ENCODE measurements at regions of chr15 and their contacts with region 1.

Region 1: DNA sequence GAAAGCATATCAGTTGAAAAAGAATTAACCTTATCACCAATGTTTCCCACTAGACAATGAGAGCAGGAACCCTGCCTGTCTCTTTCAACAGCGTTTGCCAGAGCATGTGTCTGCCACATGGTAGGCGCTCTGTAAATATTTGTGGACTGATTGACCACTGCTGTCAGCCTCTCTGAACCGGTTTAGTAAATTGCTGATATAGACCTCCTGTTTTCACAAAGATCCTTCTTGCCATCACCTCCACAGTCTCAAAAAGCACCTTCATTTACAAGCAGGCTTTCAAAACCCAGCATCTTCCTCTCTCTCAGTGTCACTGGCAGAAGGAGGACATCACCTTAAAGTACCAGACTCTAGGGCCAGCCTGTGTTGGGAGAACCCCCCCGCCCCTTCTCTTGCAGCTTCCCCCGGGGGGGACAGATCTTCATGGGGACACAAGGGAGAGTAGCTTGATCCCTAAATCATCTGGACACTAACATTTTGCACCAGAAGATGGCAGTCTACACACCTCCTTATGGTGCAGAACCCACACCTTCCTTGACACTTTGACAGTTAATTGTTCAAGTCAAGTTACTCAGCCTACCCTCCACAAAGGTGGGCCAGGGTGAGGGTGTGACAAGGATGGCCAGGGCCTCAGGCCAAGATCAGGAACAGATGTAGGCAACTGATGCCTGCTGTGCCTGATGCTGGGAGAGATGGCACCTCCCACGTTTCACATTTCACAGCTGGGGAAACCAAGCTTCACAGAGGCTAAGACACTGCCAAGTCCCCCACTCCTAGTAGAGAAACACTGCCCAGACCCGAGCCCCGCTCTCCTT is 37.8 kb upstream of the USP3 start:
- DNase-seq: no peak
- ATAC-seq: peak; percentile 96
- H3K4me3 ChIP-seq: no peak overlapping the region
- H3K27ac ChIP-seq: no peak overlapping the region
- H3K4me1 ChIP-seq: peaks cover 16% of the 10 kb centered on the region
- H3K27me3 ChIP-seq: no peaks in the 10 kb centered on the region
- CTCF ChIP-seq: peak; percentile 65 to 79 (median 70)
- EP300 ChIP-seq: no peak
- POLR2A ChIP-seq: no peak
- RAD21 ChIP-seq: peak; percentile 89

Region 2: GRCh38 chr15:63318344-63318743 is 148.2 kb before region 1 on chr15:
- CTCF ChIA-PET with region 1: no interaction called
- POLR2A ChIA-PET with region 1: no interaction called
- RAD21 ChIA-PET with region 1: no interaction called
- SMC1A ChIA-PET with region 1: no interaction called
- in situ Hi-C with region 1: no loop called
- intact Hi-C with region 1: no loop called
- DNase-seq: peak; percentile 8
- ATAC-seq: peak; percentile 74
- H3K4me3 ChIP-seq: no peak overlapping the region
- H3K27ac ChIP-seq: no peak overlapping the region
- H3K4me1 ChIP-seq: no peaks in the 10 kb centered on the region
- H3K27me3 ChIP-seq: no peaks in the 10 kb centered on the region
- CTCF ChIP-seq: no peak
- EP300 ChIP-seq: no peak
- POLR2A ChIP-seq: no peak
- RAD21 ChIP-seq: no peak

Region 3: GRCh38 chr15:63481105-63481810 is 14.7 kb after region 1 on chr15:
- CTCF ChIA-PET with region 1: interaction called, 62 read pairs
- POLR2A ChIA-PET with region 1: interaction called, 4 read pairs
- RAD21 ChIA-PET with region 1: interaction called, 84 read pairs
- SMC1A ChIA-PET with region 1: interaction called, 89 read pairs
- in situ Hi-C with region 1: no loop called
- intact Hi-C with region 1: no loop called
- DNase-seq: peak; percentile 83
- ATAC-seq: peak; percentile 60
- H3K4me3 ChIP-seq: no peak overlapping the region
- H3K27ac ChIP-seq: peak overlapping the region; percentile 77
- H3K4me1 ChIP-seq: peaks cover 88% of the 10 kb centered on the region
- H3K27me3 ChIP-seq: no peaks in the 10 kb centered on the region
- CTCF ChIP-seq: 0 out of 6 replicates have a peak, but pooled peaks of 1 of the 3 experiments have one; percentile 4
- EP300 ChIP-seq: 0 out of 4 replicates have a peak, but pooled peaks of 1 of the 2 experiments have one; percentile 23
- POLR2A ChIP-seq: no peak
- RAD21 ChIP-seq: no peak

Region 4: DNA sequence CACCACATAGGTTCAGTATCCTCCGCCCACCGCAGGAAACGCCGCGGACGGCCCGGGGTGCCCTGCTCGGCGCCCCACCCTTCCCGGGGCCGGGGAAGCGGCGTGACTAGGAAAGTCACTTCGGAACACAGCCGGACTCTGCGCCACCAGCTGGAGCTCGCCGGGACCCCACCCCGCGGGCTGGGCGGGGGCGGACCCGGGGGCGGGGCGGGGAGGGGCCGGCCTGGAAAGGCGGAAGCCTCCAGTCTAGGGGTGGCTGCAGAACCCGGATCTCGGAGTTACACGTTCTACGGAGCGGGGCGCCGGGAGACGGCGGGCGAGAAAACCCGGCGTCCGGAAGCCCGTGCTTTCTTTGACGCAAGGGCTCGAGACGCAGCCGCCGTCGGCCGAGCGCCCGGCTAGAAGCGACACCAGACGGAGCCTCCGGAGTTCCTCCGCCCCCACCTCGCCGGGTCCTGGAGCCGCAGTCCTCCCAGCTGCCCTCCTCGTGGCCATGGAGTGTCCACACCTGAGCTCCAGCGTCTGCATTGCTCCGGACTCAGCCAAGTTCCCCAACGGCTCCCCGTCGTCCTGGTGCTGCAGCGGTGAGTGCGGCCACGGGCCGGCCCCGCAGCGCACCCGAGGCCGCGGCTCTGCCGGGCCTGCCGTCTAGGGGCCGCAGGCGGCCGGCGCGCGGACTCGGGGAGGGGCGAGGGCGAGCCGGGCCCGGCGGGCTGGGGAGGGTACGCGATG is 37.8 kb after region 1 on chr15 and contains the start of gene USP3:
- CTCF ChIA-PET with region 1: interaction called, 34 read pairs
- POLR2A ChIA-PET with region 1: interaction called, 5 read pairs
- RAD21 ChIA-PET with region 1: interaction called, 197 read pairs
- SMC1A ChIA-PET with region 1: interaction called, 51 read pairs
- in situ Hi-C with region 1: no loop called
- intact Hi-C with region 1: no loop called
- DNase-seq: no peak
- ATAC-seq: peak; percentile 72
- H3K4me3 ChIP-seq: peak within 1 kb of the TSS; percentile 96
- H3K27ac ChIP-seq: peak within 1 kb of the TSS; percentile 100
- H3K4me1 ChIP-seq: peaks cover 30% of the 10 kb centered on the region
- H3K27me3 ChIP-seq: no peaks in the 10 kb centered on the region
- CTCF ChIP-seq: peak in 2 of 3 experiments; percentile 30 to 39; a peak in 4 of 6 replicates
- EP300 ChIP-seq: peak in 1 of 2 experiments; percentile 50; a peak in 3 of 4 replicates
- POLR2A ChIP-seq: peak; percentile 85
- RAD21 ChIP-seq: peak; percentile 30
- polyA plus RNA-seq, gene USP3: 23.8 to 45.7 TPM

Region 5: DNA sequence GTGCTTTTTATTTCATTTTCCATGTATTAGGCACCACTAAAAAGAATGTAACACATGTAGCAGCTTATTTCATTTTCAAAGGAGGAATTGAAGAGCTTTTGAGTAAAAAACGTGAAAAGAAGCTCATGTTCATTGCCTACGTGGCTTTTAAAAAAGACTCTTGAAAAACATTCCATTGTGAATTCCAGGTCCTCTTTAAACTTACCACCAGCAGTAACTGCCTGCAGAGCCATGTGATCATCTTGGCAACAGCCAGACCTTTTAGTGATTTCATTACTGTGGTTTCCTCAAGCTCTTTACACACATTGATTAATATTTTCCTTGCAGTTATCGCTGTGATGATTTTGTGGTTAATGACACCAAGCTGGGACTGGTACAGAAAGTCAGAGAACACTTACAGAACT is 86.8 kb after region 1 on chr15:
- CTCF ChIA-PET with region 1: interaction called, 17 read pairs
- POLR2A ChIA-PET with region 1: no interaction called
- RAD21 ChIA-PET with region 1: interaction called, 13 read pairs
- SMC1A ChIA-PET with region 1: interaction called, 4 read pairs
- in situ Hi-C with region 1: no loop called
- intact Hi-C with region 1: no loop called
- DNase-seq: no peak
- ATAC-seq: peak; percentile 47
- H3K4me3 ChIP-seq: no peak overlapping the region
- H3K27ac ChIP-seq: no peak overlapping the region
- H3K4me1 ChIP-seq: peaks cover 5% of the 10 kb centered on the region
- H3K27me3 ChIP-seq: no peaks in the 10 kb centered on the region
- CTCF ChIP-seq: no peak
- EP300 ChIP-seq: no peak
- POLR2A ChIP-seq: no peak
- RAD21 ChIP-seq: no peak

Region 6: GRCh38 chr15:63600616-63601025 is 134.0 kb after region 1 on chr15:
- CTCF ChIA-PET with region 1: interaction called, 272 read pairs
- POLR2A ChIA-PET with region 1: interaction called, 12 read pairs
- RAD21 ChIA-PET with region 1: interaction called, 106 read pairs
- SMC1A ChIA-PET with region 1: interaction called, 150 read pairs
- in situ Hi-C with region 1: no loop called
- intact Hi-C with region 1: loop called (anchors 2 kb)
- DNase-seq: peak; percentile 77
- ATAC-seq: peak; percentile 80
- H3K4me3 ChIP-seq: peak overlapping the region; percentile 87
- H3K27ac ChIP-seq: peak overlapping the region; percentile 85
- H3K4me1 ChIP-seq: peaks cover 34% of the 10 kb centered on the region
- H3K27me3 ChIP-seq: no peaks in the 10 kb centered on the region
- CTCF ChIP-seq: no peak; a peak in 1 of 6 replicates
- EP300 ChIP-seq: no peak
- POLR2A ChIP-seq: peak; percentile 94
- RAD21 ChIP-seq: no peak

Region 7: DNA sequence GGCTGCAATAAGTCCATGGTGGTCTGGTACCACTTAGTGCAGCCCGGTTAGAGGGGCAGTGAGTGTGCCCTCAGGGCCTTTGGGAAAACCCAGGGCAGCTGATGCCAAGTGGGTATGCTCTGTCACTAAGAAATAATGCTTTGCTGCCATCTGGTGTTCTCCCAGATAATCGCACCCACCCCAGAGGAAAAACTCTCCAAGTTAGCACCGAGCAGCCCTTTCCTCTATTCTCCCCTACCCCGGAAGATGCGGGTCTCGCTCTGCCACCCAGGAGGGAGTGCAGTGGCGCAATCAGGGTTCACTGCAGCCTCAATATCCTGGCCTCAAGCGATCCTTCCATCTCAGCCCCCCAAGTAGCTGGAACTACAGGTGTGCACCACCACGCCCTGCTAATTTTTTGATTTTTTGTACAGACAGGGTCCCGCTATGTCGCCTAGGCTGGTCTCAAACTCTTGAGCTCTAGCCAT is 601.0 kb after region 1 on chr15:
- CTCF ChIA-PET with region 1: interaction called, 3 read pairs
- POLR2A ChIA-PET with region 1: no interaction called
- RAD21 ChIA-PET with region 1: interaction called, 4 read pairs
- SMC1A ChIA-PET with region 1: no interaction called
- in situ Hi-C with region 1: loop called (anchors 5 kb)
- intact Hi-C with region 1: no loop called
- DNase-seq: peak; percentile 40
- ATAC-seq: peak; percentile 94
- H3K4me3 ChIP-seq: no peak overlapping the region
- H3K27ac ChIP-seq: no peak overlapping the region
- H3K4me1 ChIP-seq: peaks cover 13% of the 10 kb centered on the region
- H3K27me3 ChIP-seq: no peaks in the 10 kb centered on the region
- CTCF ChIP-seq: peak; percentile 72 to 83 (median 77)
- EP300 ChIP-seq: no peak
- POLR2A ChIP-seq: no peak
- RAD21 ChIP-seq: peak; percentile 89

Region 8: DNA sequence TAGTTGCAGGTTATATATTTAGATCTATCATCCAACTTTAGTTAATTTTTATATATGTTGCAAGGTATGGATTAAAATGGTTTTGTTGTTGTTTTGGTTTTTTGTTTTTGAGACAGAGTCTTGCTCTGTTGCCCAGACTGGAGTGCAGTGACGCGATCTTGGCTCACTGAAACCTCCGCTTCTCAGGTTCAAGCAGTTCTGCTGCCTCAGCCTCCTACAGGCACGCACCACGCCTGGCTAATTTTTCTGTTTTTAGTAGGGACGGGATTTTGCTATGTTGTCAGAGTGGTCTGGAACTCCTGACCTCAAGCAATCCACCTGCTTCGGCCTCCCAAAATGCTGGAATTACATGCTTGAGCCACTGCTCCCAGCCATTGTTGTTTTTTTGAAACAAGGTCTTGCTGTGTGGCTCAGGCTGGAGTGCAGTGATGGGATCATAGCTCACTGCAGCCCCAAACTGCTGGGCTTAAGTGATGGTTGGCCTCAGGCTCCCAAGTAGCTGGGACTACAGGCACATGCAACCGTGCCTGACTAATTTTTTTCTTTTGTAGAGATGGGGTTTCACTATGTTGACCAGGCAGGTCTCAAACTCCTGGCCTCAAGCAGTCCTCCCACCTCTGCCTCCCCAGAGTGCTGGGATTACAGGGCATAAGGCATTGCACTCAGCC is 1085.8 kb after region 1 on chr15:
- CTCF ChIA-PET with region 1: no interaction called
- POLR2A ChIA-PET with region 1: no interaction called
- RAD21 ChIA-PET with region 1: no interaction called
- SMC1A ChIA-PET with region 1: no interaction called
- in situ Hi-C with region 1: no loop called
- intact Hi-C with region 1: no loop called
- DNase-seq: no peak
- ATAC-seq: peak; percentile 56
- H3K4me3 ChIP-seq: no peak overlapping the region
- H3K27ac ChIP-seq: no peak overlapping the region
- H3K4me1 ChIP-seq: 0 out of 2 replicates have a peak, but pooled peaks cover 3% of the 10 kb centered on the region
- H3K27me3 ChIP-seq: no peaks in the 10 kb centered on the region
- CTCF ChIP-seq: no peak
- EP300 ChIP-seq: no peak
- POLR2A ChIP-seq: no peak
- RAD21 ChIP-seq: no peak